Mammary epithelial cell (primary cell): ENCODE measurements at regions of chr19 and their contacts with region 1.

Region 1: DNA sequence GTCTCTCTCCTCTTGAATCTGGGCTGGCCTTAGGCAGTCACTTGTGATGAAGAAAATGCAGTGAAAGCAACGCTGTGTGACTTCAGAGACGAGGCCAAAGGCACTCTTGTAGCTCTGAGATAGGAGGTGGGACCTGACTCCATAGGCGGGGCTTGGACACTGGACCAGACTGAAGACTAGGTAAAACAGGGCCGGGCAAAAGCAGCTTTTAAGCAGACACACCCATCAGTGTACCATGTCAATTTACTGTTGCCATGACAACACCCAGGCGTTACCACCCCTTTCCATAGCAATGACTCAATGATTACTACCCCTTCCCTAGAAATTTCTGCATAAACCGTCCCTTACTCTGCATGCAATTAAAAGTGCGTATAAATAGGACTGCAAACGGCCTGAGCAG is 6.6 kb upstream of the EID2 start:
- DNase-seq: peak; percentile 21
- H3K4me3 ChIP-seq: no peak overlapping the region
- H3K27ac ChIP-seq: no peak overlapping the region
- H3K4me1 ChIP-seq: peaks cover 25% of the 10 kb centered on the region
- H3K27me3 ChIP-seq: no peaks in the 10 kb centered on the region
- CTCF ChIP-seq: no peak

Region 2: DNA sequence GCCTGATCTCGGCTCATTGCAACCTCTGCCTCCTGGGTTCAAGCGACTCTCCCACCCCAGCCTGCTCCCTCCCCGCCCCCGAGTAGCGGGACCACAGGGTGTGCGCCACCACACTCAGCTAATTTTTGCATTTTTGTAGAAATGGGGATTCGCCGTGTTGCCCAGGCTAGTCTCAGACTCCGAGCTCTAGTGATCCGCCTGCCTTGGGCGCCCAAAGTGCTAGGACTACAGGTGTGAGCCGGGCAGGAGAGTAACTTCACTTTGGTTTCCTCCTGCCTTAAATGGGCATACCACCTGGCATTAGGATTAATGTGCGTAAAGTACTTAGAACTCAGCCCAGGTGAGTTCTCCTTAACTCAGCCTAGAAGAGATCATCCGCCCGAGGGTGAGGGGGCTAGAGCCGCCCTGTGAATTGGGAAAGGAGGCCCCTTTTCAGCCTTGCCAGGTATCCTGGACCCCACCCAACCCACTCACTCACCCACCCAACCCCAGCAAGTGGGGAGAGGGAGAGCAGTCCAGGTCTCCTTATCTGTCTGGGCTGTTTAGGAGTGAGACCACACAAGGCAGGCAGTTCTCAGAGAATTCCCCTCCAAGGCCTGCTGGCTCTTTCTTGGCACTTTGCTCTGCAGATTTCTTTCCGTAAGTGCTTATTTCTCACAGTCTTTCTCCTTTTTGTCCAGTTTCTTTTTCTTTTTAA is 141.2 kb before region 1 on chr19:
- CTCF ChIA-PET with region 1: no interaction called
- dilution Hi-C with region 1: no loop called
- in situ Hi-C with region 1: no loop called
- intact Hi-C with region 1: no loop called
- DNase-seq: no peak
- H3K4me3 ChIP-seq: no peak overlapping the region
- H3K27ac ChIP-seq: no peak overlapping the region
- H3K4me1 ChIP-seq: peaks cover 41% of the 10 kb centered on the region
- H3K27me3 ChIP-seq: no peaks in the 10 kb centered on the region
- CTCF ChIP-seq: no peak

Region 3: DNA sequence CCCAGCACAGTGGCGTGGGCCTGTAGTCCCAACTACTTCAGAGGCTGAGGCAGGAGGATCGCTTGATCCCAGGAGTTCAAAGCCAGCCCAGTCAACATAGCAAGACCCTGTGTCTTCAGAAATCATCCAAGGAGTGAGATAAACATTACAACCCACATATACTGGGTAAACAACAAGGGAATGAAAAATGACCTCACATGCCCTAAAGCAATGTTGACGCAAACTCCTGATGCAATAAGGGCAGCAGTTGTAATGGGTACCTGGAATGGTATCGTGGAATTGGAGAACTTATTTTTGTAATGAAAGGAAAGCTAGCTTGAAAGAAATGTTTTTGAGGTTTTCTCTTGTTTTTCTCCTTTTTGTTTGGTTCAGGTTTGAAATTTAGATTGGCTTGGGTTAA is 84.6 kb after region 1 on chr19:
- CTCF ChIA-PET with region 1: no interaction called
- dilution Hi-C with region 1: no loop called
- in situ Hi-C with region 1: no loop called
- intact Hi-C with region 1: loop called (anchors 1 kb)
- DNase-seq: peak; percentile 16
- H3K4me3 ChIP-seq: no peak overlapping the region
- H3K27ac ChIP-seq: no peak overlapping the region
- H3K4me1 ChIP-seq: no peaks in the 10 kb centered on the region
- H3K27me3 ChIP-seq: no peaks in the 10 kb centered on the region
- CTCF ChIP-seq: no peak